Cardiac septum (tissue), 1 donor: ENCODE measurements at regions of chr18 and their contacts with region 1.

Region 1: GRCh38 chr18:74459889-74460288 is 2.8 kb upstream of the DIPK1C start:
- DNase-seq: no peak

Region 2: GRCh38 chr18:74368901-74369705 is 90.8 kb before region 1 on chr18:
- intact Hi-C with region 1: loop called (anchors 5 kb)
- DNase-seq: no peak

Region 3: DNA sequence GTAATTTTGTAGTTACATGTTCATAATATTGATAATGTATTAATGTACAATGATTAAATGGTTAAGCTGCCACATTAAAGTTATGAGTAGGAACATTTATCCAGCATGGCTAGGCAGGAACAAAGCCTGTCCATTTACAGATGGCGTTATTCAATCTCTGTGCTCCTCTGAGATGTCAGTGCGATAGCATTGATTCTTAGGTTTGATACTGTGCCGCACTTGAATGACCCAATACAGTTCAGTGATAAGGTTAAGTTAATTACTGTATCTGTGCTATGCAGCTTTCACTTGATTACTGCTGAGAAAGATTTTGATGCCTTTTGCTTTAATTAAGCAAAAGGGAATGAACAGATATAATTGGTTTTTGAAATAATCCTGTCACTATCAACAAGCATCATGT is 249.6 kb after region 1 on chr18:
- intact Hi-C with region 1: no loop called
- DNase-seq: no peak